ENCODE measurements at regions of chr12 and their contacts with region 1.

Region 1: DNA sequence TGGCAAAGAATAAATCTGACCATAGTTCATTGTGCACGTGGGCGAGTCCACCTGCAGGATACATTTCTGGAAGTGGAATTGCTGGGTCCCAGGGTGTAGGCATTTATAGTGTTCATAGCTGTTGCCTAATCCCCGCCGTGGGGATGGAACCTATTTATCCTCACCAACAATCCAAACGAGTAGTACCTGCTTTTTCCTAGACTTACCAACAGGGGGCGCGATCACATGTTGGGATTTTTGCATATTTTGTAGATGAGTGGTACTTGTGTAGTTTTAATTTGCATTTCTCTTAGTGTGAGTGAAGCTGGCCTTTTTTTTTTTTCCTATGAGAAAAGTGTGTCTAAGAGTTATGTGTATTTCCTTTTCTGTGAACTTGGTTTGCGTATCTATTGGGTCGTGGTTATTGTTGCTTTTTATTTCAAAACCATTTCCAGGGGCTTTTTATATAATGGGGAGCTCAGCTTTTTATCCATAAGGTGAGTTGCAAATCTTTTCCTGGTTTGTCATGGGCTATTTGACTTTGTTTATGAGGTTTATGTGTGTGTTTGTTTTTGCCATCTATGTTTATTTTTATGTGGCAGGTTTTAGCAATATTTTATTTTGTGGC is 67.2 kb downstream of the CCDC92 start:
- DNase-seq: no peak
- ATAC-seq: peak; percentile 42

Region 2: GRCh38 chr12:123813349-123813748 is 92.1 kb before region 1 on chr12:
- intact Hi-C with region 1: no loop called
- DNase-seq: no peak
- ATAC-seq: no peak

Region 3: GRCh38 chr12:123983822-123984485 is 78.5 kb after region 1 on chr12:
- intact Hi-C with region 1: loop called (anchors 5 kb)
- DNase-seq: no peak
- ATAC-seq: peak; percentile 83